HepG2 (cell line): ENCODE measurements at regions of chr22 and their contacts with region 1.

Region 1: GRCh38 chr22:29394931-29395581 is 6.7 kb upstream of the AP1B1 start:
- DNase-seq: peak; percentile 70
- ATAC-seq: peak; percentile 91
- H3K4me3 ChIP-seq: no peak overlapping the region
- H3K27ac ChIP-seq: no peak overlapping the region
- H3K4me1 ChIP-seq: peaks cover 35% of the 10 kb centered on the region
- H3K27me3 ChIP-seq: no peaks in the 10 kb centered on the region; a peak in 1 of 5 replicates
- CTCF ChIP-seq: peak; percentile 93
- EP300 ChIP-seq: no peak
- POLR2A ChIP-seq: no peak
- RAD21 ChIP-seq: peak; percentile 80

Region 2: DNA sequence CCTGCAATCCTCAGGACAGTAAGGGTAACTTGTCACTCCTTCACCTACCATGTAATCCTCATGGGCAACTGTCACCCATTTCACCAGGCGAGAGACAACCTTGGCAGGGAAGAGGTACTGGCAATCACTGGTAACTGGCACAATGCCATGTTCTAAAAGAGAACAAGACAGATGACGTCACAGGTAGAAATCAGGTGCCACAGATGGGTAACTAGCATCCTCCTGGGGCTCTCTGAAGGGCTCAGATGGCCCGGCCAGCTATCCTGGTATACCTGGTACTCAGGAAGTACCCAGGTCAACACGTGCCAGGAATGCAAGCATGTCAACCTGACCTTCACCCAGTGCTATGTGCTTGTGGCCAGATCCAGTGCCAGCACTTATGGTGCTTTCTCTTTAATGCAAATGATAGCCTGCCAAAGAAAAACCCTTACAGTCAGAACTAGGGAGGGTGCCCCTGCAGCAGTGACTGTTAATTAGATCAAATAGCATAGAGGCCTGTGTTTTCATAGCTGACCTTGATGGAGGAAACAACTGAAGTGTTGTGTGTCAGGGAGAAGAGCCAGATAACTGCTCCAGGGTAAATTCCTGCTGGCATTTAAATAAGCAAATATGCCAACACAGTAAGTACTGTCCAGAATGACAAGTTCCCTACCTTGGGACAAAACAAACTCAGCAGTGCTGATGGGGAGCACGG is 122.3 kb after region 1 on chr22:
- CTCF ChIA-PET with region 1: no interaction called
- POLR2A ChIA-PET with region 1: no interaction called
- in situ Hi-C with region 1: loop called (anchors 10 kb)
- intact Hi-C with region 1: no loop called
- DNase-seq: no peak
- ATAC-seq: no peak
- H3K4me3 ChIP-seq: no peak overlapping the region
- H3K27ac ChIP-seq: no peak overlapping the region
- H3K4me1 ChIP-seq: no peaks in the 10 kb centered on the region
- H3K27me3 ChIP-seq: no peaks in the 10 kb centered on the region
- CTCF ChIP-seq: no peak
- EP300 ChIP-seq: no peak
- POLR2A ChIP-seq: no peak
- RAD21 ChIP-seq: no peak